Heart right ventricle (tissue), 16 donors: ENCODE measurements at regions of chr17 and their contacts with region 1.

Region 1: GRCh38 chr17:75574416-75575036 is 13.1 kb upstream of the MYO15B start:
- DNase-seq: no peak
- ATAC-seq: no peak
- H3K4me3 ChIP-seq: no peak overlapping the region
- H3K27ac ChIP-seq: no peak overlapping the region
- H3K4me1 ChIP-seq: peaks cover 0 to 26% (median 9%) of the 10 kb centered on the region in 9 donors
- H3K27me3 ChIP-seq: no peaks in the 10 kb centered on the region
- CTCF ChIP-seq: no peak

Region 2: DNA sequence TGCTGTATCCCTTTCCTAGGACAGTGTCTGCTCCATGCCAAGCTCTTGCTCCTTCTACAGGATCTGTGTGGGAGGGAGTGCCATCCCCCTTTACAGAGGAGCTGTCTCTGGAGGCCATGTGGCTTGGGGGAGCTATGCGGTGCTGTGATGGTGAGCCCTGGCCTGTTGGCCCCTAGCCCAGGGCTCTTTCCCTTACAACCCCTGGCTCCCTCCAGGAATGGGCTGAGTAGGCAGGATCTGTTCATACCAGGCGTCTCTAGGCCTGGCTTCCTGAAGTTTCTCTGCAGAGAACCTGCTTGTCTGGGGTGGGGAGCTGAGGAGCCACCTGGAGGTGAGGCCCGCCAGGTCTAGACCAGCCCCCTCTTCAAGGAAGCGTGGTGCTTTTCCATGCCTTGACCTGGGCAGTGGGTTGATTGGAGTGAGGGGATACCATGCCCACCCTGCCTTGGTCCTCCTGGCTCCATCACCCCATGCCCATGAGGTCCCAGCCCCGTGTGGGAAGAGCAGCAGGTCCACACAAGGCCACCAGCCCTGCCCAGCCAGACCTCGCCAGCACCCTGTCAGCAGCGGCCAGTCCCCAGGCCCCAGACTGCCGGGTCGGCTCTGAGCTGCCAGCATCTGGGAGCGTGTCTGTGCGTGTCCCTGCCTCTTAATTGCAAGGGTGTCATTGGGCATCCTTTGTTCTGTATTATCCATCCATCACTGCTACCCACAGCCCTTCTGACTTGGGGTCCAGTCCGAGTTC is 34.4 kb before region 1 on chr17:
- intact Hi-C with region 1: loop called in 1 of 10 experiments (anchors 5 kb)
- DNase-seq: no peak
- ATAC-seq: peak in 6 of 8 donors; percentile 10 to 56 (median 24)
- H3K4me3 ChIP-seq: no peak overlapping the region
- H3K27ac ChIP-seq: no peak overlapping the region
- H3K4me1 ChIP-seq: no peaks in the 10 kb centered on the region
- H3K27me3 ChIP-seq: no peaks in the 10 kb centered on the region
- CTCF ChIP-seq: no peak